Right ventricle myocardium inferior (tissue), 1 donor: ENCODE measurements at regions of chr7 and their contacts with region 1.

Region 1: GRCh38 chr7:107286751-107287621 is 118.2 kb downstream of the HBP1 start:
- DNase-seq: no peak
- ATAC-seq: peak; percentile 72

Region 2: GRCh38 chr7:106767498-106768323 is 519.3 kb before region 1 on chr7:
- intact Hi-C with region 1: no loop called
- DNase-seq: no peak
- ATAC-seq: no peak

Region 3: DNA sequence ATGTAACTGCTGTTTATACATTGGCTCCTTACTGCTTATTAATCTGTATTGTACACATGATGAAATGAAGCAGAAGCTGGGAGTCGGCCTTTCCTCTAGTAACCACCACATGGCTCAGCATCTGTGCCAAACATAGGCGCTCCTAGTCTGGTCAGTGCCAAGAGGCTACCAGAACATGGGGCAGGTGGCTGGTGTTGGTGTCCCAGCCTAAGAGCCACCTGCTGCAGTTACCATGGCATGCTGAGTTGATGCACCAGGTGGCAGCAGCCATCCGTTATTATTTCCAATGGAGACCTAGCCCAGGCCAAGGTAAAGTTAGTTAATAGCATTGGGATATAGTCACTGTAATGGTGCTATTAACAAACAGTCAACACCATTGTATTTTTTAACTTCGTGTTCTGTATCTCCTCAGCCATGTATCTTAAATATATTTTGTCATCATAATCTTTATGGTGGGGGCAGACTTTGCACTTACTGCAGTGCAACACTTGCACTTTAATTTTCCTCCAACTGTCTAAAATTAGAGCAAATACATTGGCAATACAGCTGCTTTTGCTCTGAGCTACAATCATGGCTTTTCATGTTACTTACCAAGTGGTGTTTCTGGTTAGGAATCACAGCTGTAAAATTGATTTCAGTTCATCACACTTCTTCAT is 85.1 kb before region 1 on chr7:
- intact Hi-C with region 1: loop called (anchors 5 kb)
- DNase-seq: no peak
- ATAC-seq: peak; percentile 89

Region 4: GRCh38 chr7:107224374-107225223 is 62.4 kb before region 1 on chr7:
- intact Hi-C with region 1: loop called (anchors 2 kb)
- DNase-seq: no peak
- ATAC-seq: peak; percentile 38

Region 5: DNA sequence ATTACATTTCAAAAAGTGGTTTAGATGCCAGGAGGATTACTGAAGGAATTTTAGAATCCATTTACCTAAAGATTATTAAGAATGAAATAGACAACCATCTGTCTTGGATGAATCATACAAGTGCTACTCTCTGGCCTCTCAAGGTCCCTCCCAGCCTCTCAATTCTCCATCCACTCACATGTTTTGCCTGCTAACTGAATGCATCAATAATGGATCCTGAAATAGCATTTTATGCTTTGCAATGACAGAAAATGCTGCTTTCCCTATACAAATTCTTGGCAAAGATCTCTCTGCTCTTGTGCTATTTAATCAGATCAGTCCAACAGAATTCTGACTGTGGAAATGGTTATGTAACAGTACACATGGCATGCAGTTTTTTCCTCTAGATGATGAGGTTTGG is 50.1 kb before region 1 on chr7:
- intact Hi-C with region 1: loop called (anchors 5 kb)
- DNase-seq: no peak
- ATAC-seq: no peak

Region 6: DNA sequence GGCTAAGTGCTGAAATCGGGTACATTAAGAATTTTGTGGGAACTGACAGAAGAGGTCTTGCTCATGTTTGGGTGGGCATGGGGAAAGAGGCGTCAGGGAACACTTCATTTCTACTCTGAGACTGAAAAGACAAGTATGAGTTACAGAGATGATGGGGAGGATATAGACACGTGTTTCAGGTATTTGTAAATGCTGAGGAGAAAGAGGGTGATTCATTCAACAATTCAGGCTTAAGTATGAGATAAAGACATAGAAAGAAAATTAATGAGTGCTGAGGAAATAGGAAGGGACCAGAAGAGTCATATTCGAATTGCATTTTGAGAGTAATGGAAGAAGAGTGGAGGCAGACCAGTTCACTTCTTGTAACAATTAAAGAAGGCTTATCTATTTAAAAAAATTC is 25.4 kb after region 1 on chr7:
- intact Hi-C with region 1: no loop called
- DNase-seq: no peak
- ATAC-seq: no peak

Region 7: GRCh38 chr7:107462740-107463444 is 175.9 kb after region 1 on chr7:
- intact Hi-C with region 1: loop called (anchors 5 kb)
- DNase-seq: no peak
- ATAC-seq: peak; percentile 87